HEK293 (cell line): ENCODE measurements at regions of chr22 and their contacts with region 1.

Region 1: DNA sequence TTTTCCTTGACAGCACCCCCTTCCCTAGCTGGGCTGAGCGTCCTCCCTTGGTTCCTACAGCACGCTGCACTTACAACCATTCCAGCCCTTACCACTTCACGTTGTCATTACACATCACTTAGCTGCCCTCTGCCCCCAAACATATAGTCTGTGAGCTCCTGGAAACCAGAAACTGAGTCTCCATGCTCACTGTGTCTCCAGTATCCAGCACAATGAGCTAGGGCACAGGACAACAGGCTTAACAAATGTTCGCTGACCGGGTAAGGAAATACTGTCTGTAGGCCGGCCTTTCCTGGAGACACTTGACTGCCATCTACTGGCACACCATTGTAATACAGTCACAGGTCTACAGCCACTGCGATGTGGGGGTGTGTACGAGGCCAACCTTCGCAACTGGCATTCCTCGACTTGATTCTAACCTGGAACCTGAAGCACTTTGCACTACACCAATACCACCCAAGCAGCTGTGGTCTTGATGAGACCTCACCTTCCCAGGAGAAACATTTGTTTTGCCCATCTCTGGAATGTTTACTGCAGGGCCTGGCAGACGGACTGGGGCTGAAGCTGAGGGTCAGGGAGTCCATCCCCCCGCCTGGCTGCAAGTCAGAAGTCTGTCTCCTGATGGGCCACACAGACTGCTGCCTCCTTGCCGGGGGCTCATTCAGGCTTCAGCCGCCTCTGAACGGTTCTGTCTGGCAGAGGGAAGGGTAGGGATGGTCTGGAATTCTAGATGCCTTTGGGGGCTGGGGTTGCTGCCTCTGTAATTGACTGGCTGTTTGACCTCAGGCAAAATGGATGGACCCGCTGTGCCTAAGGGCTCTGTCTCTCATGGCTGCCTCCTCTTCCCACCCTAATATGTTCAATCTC is 72.0 kb downstream of the SYN3 start:
- H3K4me3 ChIP-seq: no peak overlapping the region
- H3K27ac ChIP-seq: no peak overlapping the region
- H3K4me1 ChIP-seq: no peaks in the 10 kb centered on the region
- CTCF ChIP-seq: peak; percentile 75

Region 2: GRCh38 chr22:32926600-32926999 is 59.5 kb before region 1 on chr22:
- CTCF ChIA-PET with region 1: interaction called, 14 read pairs
- POLR2A ChIA-PET with region 1: no interaction called
- H3K4me3 ChIP-seq: no peak overlapping the region
- H3K27ac ChIP-seq: no peak overlapping the region
- H3K4me1 ChIP-seq: no peaks in the 10 kb centered on the region
- CTCF ChIP-seq: peak; percentile 43; the same call in 1 of the 2 replicates

Region 3: GRCh38 chr22:32967386-32968101 is 18.6 kb before region 1 on chr22:
- CTCF ChIA-PET with region 1: interaction called, 30 read pairs
- POLR2A ChIA-PET with region 1: no interaction called
- H3K4me3 ChIP-seq: no peak overlapping the region
- H3K27ac ChIP-seq: no peak overlapping the region
- H3K4me1 ChIP-seq: no peaks in the 10 kb centered on the region
- CTCF ChIP-seq: no peak

Region 4: DNA sequence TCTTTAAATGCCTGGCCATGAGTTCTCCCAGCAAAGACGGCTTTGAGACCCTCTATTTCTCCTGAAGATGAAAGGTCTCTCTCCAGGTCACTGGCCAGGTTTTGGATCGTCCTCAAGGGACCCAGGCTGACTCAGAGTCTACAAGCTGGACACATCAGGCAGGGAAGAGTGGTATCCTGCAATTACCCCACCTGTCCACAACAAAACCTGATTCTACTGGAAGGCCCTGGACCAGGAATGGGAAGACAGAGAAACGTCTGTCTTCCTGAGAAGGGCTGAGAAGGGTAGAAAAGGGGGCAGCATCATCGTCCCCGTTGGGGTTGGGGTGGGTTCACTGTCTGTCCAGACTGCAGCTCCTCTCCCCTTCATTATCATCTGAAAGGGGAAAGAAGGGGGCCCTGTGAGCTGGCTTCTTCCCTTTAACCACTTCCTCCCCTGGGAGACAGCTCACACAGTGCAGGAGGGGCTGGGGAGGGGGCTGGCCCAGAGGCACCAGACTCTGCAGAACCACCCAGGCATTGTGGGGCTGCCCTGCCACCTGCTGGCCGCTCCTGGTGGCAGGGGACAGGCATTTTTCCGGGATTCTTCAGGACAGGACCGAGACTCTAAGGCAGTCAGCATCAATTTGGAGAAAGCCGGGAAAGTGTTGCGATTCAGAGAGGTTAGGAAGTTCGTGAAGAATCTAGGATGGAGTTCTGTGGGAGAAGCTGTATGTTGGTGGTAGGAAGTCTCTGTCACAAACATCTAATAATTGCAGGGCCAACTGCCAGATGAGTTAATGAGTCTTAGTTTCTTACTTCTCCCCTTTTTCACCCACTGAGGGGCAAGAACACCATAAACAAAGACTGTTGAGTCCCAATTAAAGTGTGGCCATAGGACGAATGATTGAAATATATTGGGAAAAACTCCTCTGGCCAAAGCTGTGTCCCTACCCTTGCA is 14.5 kb after region 1 on chr22:
- CTCF ChIA-PET with region 1: interaction called, 39 read pairs
- POLR2A ChIA-PET with region 1: no interaction called
- H3K4me3 ChIP-seq: no peak overlapping the region
- H3K27ac ChIP-seq: no peak overlapping the region
- H3K4me1 ChIP-seq: no peaks in the 10 kb centered on the region
- CTCF ChIP-seq: peak; percentile 76